ENCODE measurements at regions of chr10 and their contacts with region 1.

Region 1: DNA sequence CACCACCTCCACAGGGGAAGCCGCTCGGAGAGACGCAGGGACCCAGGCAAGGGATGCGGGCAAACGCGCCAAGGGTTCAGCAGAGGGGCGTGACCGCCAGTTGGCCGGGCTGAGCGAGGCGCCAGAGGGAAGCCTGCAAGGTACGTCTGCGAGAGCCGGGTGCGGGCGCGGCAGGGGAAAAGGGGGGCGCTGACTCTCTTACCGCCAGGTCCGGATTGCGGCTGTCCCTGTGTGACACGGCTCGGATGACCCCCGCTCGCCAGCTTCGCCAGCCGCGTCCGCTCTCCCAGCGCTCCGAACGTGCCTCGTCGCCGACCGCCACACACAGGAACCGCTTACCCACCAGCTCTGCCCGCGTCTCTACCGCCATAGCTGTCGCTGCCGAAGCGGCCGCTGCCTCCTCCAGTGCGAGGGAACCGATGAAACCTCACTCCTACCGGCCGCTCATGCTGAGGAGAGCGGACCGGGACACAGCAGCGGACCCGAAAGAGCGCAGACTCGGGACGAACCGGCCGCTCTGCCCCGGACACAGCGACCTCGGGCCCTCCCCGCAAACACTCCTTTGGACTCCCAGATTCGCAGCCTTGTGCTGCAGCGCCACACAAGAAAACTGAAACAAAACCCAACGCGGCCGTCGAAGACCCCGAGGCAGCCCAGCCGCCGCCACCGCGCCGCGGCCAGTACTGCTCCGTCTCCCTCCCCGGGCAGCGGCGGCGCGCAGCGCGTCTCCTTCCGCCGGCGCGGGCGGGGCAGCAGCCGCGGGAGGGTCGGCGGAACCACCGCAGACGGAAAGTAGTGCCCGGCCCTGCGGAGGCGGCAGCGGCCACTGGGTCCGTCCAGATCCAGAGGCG is at the start of gene JMJD1C:
- DNase-seq: peak; percentile 82 to 87 (median 84)
- ATAC-seq: peak; percentile 83
- H3K4me3 ChIP-seq: peak within 1 kb of the TSS; percentile 73
- H3K27ac ChIP-seq: peak within 1 kb of the TSS; percentile 89
- H3K4me1 ChIP-seq: peaks cover 0 to 19% of the 10 kb centered on the region in 2 experiments; a peak in 4 of 5 replicates
- H3K27me3 ChIP-seq: no peaks in the 10 kb centered on the region
- CTCF ChIP-seq: peak in 2 of 3 experiments; percentile 1 to 24; a peak in 2 of 6 replicates
- EP300 ChIP-seq: no peak
- POLR2A ChIP-seq: peak; percentile 86
- RAD21 ChIP-seq: peak in 1 of 2 experiments; percentile 10; a peak in 3 of 4 replicates
- polyA plus RNA-seq, gene JMJD1C: 25.3 to 38.5 TPM

Region 2: GRCh38 chr10:63217120-63217605 is 248.4 kb before region 1 on chr10:
- CTCF ChIA-PET with region 1: no interaction called
- POLR2A ChIA-PET with region 1: no interaction called
- in situ Hi-C with region 1: no loop called
- intact Hi-C with region 1: loop called (anchors 5 kb)
- DNase-seq: peak in 2 of 4 experiments; percentile 39 to 61
- ATAC-seq: peak; percentile 79
- H3K4me3 ChIP-seq: no peak overlapping the region
- H3K27ac ChIP-seq: no peak overlapping the region
- H3K4me1 ChIP-seq: no peaks in the 10 kb centered on the region
- H3K27me3 ChIP-seq: no peaks in the 10 kb centered on the region
- CTCF ChIP-seq: peak; percentile 38 to 77 (median 47); a peak in 3 of 6 replicates
- EP300 ChIP-seq: no peak
- POLR2A ChIP-seq: no peak
- RAD21 ChIP-seq: peak; percentile 87 to 90

Region 3: GRCh38 chr10:63454631-63455030 is 10.9 kb before region 1 on chr10:
- CTCF ChIA-PET with region 1: no interaction called
- POLR2A ChIA-PET with region 1: interaction called, 21 read pairs
- in situ Hi-C with region 1: no loop called
- intact Hi-C with region 1: no loop called
- DNase-seq: no peak
- ATAC-seq: peak; percentile 22; the same call in 2 of the 3 replicates
- H3K4me3 ChIP-seq: no peak overlapping the region
- H3K27ac ChIP-seq: no peak overlapping the region
- H3K4me1 ChIP-seq: no peaks in the 10 kb centered on the region; a peak in 1 of 5 replicates
- H3K27me3 ChIP-seq: no peaks in the 10 kb centered on the region
- CTCF ChIP-seq: no peak
- EP300 ChIP-seq: no peak
- POLR2A ChIP-seq: no peak
- RAD21 ChIP-seq: no peak

Region 4: DNA sequence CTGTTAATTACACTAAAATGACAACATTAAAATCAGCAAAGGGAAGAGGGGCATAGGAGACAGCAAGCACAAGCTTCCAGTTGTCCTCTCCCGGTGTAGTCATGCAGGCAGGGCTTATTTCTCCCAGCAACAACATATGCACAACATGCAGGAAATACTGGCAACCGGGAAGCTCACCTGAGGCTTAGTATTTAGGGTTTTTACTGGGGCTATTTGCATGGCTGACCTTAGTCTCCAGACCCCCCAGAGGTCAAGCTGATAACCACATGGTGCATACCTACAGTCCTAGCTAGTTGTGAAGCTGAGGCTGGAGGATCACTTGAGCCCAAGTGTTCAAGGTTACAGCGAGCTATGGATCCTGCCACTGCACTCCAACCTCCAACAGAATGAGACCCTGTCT is 13.0 kb after region 1 on chr10:
- CTCF ChIA-PET with region 1: no interaction called
- POLR2A ChIA-PET with region 1: interaction called, 12 read pairs
- in situ Hi-C with region 1: no loop called
- intact Hi-C with region 1: no loop called
- DNase-seq: peak in 2 of 4 experiments; percentile 15 to 40
- ATAC-seq: peak; percentile 84
- H3K4me3 ChIP-seq: no peak overlapping the region
- H3K27ac ChIP-seq: no peak overlapping the region
- H3K4me1 ChIP-seq: peaks cover 0 to 4% of the 10 kb centered on the region in 2 experiments; a peak in 2 of 5 replicates
- H3K27me3 ChIP-seq: no peaks in the 10 kb centered on the region
- CTCF ChIP-seq: no peak
- EP300 ChIP-seq: no peak
- POLR2A ChIP-seq: no peak
- RAD21 ChIP-seq: no peak

Region 5: GRCh38 chr10:63504125-63504880 is 38.8 kb after region 1 on chr10:
- CTCF ChIA-PET with region 1: no interaction called
- POLR2A ChIA-PET with region 1: no interaction called
- in situ Hi-C with region 1: no loop called
- intact Hi-C with region 1: no loop called
- DNase-seq: peak in 1 of 4 experiments; percentile 39
- ATAC-seq: peak; percentile 65
- H3K4me3 ChIP-seq: no peak overlapping the region
- H3K27ac ChIP-seq: peak overlapping the region; percentile 63
- H3K4me1 ChIP-seq: peaks cover 5 to 22% of the 10 kb centered on the region in 2 experiments; a peak in 4 of 5 replicates
- H3K27me3 ChIP-seq: no peaks in the 10 kb centered on the region
- CTCF ChIP-seq: peak in 1 of 3 experiments; percentile 23; a peak in 1 of 6 replicates
- EP300 ChIP-seq: no peak
- POLR2A ChIP-seq: no peak
- RAD21 ChIP-seq: no peak

Region 6: GRCh38 chr10:63521416-63522276 is 56.1 kb after region 1 on chr10:
- CTCF ChIA-PET with region 1: no interaction called
- POLR2A ChIA-PET with region 1: interaction called, 3 read pairs
- in situ Hi-C with region 1: no loop called
- intact Hi-C with region 1: loop called (anchors 2 kb)
- DNase-seq: peak; percentile 81 to 87 (median 82)
- ATAC-seq: peak; percentile 89
- H3K4me3 ChIP-seq: peak overlapping the region; percentile 76
- H3K27ac ChIP-seq: peak overlapping the region; percentile 96
- H3K4me1 ChIP-seq: peaks cover 16% of the 10 kb centered on the region in 2 experiments; a peak in 4 of 5 replicates
- H3K27me3 ChIP-seq: no peaks in the 10 kb centered on the region
- CTCF ChIP-seq: no peak
- EP300 ChIP-seq: no peak
- POLR2A ChIP-seq: peak; percentile 75
- RAD21 ChIP-seq: peak in 1 of 2 experiments; percentile 13; a peak in 2 of 4 replicates